Left cardiac atrium (tissue), 4 donors: ENCODE measurements at regions of chr3 and their contacts with region 1.

Region 1: DNA sequence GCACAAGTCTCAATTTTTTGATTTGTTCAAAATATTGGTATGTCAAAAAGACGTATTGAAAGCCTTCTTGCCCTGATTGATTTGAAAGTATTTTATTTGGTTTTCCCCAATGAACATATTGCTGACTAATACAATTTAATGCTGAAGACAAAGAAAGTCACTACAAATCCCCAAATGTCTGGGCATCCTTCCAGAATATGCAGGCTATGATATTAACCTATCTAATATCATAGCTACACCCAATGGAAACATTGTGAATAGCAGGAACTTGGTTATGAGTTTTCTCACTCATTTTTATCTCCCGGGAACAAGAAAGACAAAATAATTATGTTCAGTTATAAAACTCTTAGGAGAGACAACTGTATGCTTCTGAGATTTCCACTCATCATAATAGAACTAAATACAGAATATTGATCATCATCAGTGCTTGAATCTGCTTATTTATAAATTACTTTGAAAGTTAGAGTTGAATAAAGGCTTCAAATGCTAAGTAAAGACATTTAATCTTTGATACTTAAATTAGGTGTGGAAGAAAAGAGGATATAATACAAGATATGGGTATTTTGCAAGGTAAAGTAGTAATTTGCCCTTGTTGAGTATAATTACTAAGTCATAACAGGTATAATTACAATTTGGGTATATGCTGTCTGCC is 483.9 kb downstream of the RBMS3 start:
- DNase-seq: no peak
- ATAC-seq: peak; percentile 58 to 68

Region 2: DNA sequence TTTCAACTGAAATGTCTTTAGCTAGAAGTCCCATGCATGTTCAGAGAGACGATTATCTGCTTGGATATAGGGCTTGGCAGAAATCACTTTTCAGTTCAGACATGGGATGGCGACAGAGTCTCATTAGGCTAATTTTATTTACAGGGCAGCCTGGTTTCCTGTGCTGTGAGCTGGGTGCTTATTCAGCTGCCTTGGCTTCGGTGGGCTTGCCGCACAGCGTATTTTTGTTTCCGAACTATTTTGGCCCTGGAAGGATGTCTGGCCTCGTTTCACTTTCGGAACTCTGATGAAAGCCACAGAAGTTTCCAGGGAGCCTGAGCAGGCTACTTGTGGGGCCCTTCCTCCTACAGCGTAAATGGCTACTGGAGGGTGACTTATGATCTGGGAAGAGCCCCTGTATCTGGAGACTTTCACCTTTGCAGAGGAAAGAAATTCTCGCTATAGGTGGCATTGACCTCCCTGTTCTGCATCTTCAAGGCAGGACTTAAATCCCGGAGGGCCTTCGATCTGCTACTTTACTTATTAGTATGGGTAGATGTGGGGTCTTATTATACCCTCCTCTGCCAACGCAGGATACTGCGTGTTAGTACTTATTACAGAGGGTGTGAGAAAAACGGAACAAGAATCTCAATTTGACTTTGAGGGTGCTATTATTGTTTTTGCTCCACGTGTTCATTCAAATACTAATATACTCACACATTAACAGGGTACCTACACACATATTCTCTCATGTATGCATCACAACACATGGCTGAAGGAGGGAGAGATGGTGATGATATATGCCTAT is 847.8 kb before region 1 on chr3:
- intact Hi-C with region 1: loop called in 1 of 2 experiments (anchors 5 kb)
- DNase-seq: peak; percentile 79
- ATAC-seq: peak; percentile 94 to 96

Region 3: DNA sequence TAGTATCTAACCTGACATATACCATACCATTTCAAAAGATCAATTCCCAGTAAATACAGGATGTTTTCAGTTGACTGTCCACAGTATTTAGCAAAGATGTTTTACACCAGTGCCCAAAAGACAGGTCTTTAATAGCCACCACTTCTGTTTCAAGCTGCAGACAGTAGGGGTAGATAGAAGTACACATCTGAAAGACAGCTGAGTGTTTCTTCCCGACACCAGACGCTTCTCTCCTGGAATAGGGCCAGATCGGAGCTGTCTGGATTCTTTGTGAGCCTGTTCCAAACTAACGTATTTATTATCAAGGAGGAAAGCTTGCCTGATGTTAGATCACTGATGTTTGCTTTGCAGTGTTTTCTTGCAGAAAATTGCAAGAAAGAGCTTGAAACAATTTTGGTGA is 619.9 kb before region 1 on chr3:
- intact Hi-C with region 1: loop called (anchors 5 kb)
- DNase-seq: peak; percentile 40
- ATAC-seq: peak; percentile 80 to 86

Region 4: DNA sequence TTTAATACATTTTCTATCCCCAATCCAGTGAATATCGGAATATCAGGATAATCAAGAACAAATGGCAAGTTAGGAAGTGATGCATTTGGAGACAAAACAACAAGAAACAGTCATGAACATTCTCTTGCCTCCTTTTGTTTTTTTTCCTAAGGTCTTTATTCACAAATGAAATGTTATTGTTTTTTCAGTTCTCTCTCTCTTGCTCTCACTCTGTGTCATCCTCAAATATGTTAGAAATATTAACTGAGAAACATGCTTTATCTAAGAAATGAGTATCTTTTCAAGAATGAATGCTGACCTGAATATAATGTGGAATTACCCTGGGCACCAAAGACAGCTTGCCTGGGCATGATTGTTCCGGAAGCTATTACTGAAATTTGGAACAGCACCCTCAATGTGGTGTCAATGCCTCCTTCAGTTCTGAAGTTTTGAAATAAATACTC is 432.5 kb before region 1 on chr3:
- intact Hi-C with region 1: loop called in 1 of 2 experiments (anchors 5 kb)
- DNase-seq: no peak
- ATAC-seq: no peak

Region 5: GRCh38 chr3:29609328-29609811 is 155.4 kb before region 1 on chr3:
- intact Hi-C with region 1: no loop called
- DNase-seq: no peak
- ATAC-seq: no peak

Region 6: GRCh38 chr3:29694783-29695182 is 69.9 kb before region 1 on chr3:
- intact Hi-C with region 1: loop called in 1 of 2 experiments (anchors 5 kb)
- DNase-seq: no peak
- ATAC-seq: peak; percentile 78 to 98